H1 (cell line): ENCODE measurements at regions of chr13 and their contacts with region 1.

Region 1: DNA sequence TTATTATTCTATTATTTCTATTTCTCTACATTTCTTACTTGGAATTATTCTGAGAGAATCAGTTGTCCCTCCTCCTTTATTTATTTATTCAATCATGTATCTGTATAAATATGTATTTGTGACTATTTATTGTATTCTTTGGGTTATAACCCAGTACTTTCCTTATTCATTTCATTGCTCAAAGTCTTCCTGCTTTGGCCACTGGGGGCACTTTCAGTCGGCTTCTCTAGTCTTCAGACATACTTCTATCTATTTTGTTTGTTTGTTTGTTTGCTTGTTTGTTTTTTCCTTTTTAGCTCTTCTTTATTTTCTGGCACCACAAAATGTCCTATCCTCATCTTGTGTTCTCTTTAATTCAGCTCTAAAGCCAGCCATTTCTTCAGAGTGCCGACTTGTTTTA is 260.4 kb downstream of the NALCN start:
- DNase-seq: no peak
- H3K4me3 ChIP-seq: no peak overlapping the region
- H3K27ac ChIP-seq: no peak overlapping the region
- H3K4me1 ChIP-seq: no peaks in the 10 kb centered on the region
- H3K27me3 ChIP-seq: no peaks in the 10 kb centered on the region
- CTCF ChIP-seq: peak in 2 of 3 experiments; percentile 34 to 43; a peak in 2 of 4 replicates
- EP300 ChIP-seq: no peak
- POLR2A ChIP-seq: no peak
- RAD21 ChIP-seq: peak; percentile 33 to 35

Region 2: GRCh38 chr13:101127741-101128353 is 28.1 kb before region 1 on chr13:
- CTCF ChIA-PET with region 1: interaction called, 13 read pairs
- POLR2A ChIA-PET with region 1: no interaction called
- DNase-seq: no peak
- H3K4me3 ChIP-seq: no peak overlapping the region
- H3K27ac ChIP-seq: no peak overlapping the region
- H3K4me1 ChIP-seq: no peaks in the 10 kb centered on the region
- H3K27me3 ChIP-seq: no peaks in the 10 kb centered on the region
- CTCF ChIP-seq: peak in 2 of 3 experiments; percentile 53 to 67; a peak in 2 of 4 replicates
- EP300 ChIP-seq: no peak
- POLR2A ChIP-seq: no peak
- RAD21 ChIP-seq: peak; percentile 71 to 74

Region 3: DNA sequence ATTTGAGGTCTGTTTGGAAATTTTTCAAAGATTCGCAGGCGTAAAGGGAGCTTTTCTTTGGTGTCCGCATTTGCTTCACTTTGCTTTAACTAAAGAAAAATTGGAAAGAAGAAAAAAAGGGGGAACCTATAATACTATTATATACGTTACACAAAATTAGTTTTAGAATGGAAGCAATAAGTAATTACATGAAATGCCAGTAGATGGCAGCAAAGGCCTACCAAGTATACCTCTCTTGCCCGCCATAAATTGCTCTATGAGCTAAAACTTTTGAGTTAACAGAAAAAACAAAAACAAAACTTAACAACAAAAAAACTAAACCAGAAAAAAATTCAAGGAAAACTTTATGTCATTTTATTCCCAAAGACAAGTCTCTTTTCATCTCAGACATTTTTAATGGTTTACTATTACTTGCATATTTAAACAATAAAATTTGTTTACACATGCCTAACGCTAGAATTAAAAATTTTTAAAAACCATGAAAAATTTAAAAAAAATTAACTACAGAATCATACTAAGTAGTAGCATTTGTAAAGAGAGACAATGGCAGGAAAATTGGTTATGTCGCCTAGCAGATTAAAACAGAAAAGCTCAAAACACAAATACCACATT is 11.0 kb before region 1 on chr13:
- CTCF ChIA-PET with region 1: interaction called, 41 read pairs
- POLR2A ChIA-PET with region 1: no interaction called
- DNase-seq: no peak
- H3K4me3 ChIP-seq: no peak overlapping the region
- H3K27ac ChIP-seq: no peak overlapping the region
- H3K4me1 ChIP-seq: peaks cover 0 to 3% (median 0%) of the 10 kb centered on the region in 4 experiments; a peak in 1 of 7 replicates
- H3K27me3 ChIP-seq: no peaks in the 10 kb centered on the region
- CTCF ChIP-seq: peak in 2 of 3 experiments; percentile 31 to 48; a peak in 2 of 4 replicates
- EP300 ChIP-seq: no peak
- POLR2A ChIP-seq: no peak
- RAD21 ChIP-seq: peak; percentile 82 to 84

Region 4: GRCh38 chr13:101170306-101170705 is 14.4 kb after region 1 on chr13:
- CTCF ChIA-PET with region 1: interaction called, 31 read pairs
- POLR2A ChIA-PET with region 1: interaction called, 3 read pairs
- DNase-seq: no peak
- H3K4me3 ChIP-seq: no peak overlapping the region
- H3K27ac ChIP-seq: no peak overlapping the region
- H3K4me1 ChIP-seq: no peaks in the 10 kb centered on the region
- H3K27me3 ChIP-seq: no peaks in the 10 kb centered on the region
- CTCF ChIP-seq: no peak
- EP300 ChIP-seq: no peak
- POLR2A ChIP-seq: no peak
- RAD21 ChIP-seq: no peak

Region 5: GRCh38 chr13:101178406-101178805 is 22.5 kb after region 1 on chr13:
- CTCF ChIA-PET with region 1: interaction called, 31 read pairs
- POLR2A ChIA-PET with region 1: no interaction called
- DNase-seq: no peak
- H3K4me3 ChIP-seq: no peak overlapping the region
- H3K27ac ChIP-seq: no peak overlapping the region
- H3K4me1 ChIP-seq: no peaks in the 10 kb centered on the region
- H3K27me3 ChIP-seq: no peaks in the 10 kb centered on the region
- CTCF ChIP-seq: no peak
- EP300 ChIP-seq: no peak
- POLR2A ChIP-seq: no peak
- RAD21 ChIP-seq: no peak

Region 6: GRCh38 chr13:101202590-101202989 is 46.7 kb after region 1 on chr13:
- CTCF ChIA-PET with region 1: interaction called, 13 read pairs
- POLR2A ChIA-PET with region 1: no interaction called
- DNase-seq: peak; percentile 23 to 53
- H3K4me3 ChIP-seq: no peak overlapping the region
- H3K27ac ChIP-seq: no peak overlapping the region
- H3K4me1 ChIP-seq: no peaks in the 10 kb centered on the region
- H3K27me3 ChIP-seq: no peaks in the 10 kb centered on the region
- CTCF ChIP-seq: peak in 2 of 3 experiments; percentile 47 to 65; a peak in 3 of 4 replicates
- EP300 ChIP-seq: no peak
- POLR2A ChIP-seq: no peak
- RAD21 ChIP-seq: peak; percentile 36 to 55; a peak in 3 of 4 replicates

Region 7: GRCh38 chr13:101474419-101474957 is 318.6 kb after region 1 on chr13:
- CTCF ChIA-PET with region 1: interaction called, 206 read pairs
- POLR2A ChIA-PET with region 1: interaction called, 4 read pairs
- DNase-seq: peak in 1 of 2 experiments; percentile 61
- H3K4me3 ChIP-seq: no peak overlapping the region
- H3K27ac ChIP-seq: peak overlapping the region; percentile 16; the same call in 1 of the 2 replicates
- H3K4me1 ChIP-seq: peaks cover 0 to 4% (median 0%) of the 10 kb centered on the region in 4 experiments; a peak in 4 of 7 replicates
- H3K27me3 ChIP-seq: no peaks in the 10 kb centered on the region
- CTCF ChIP-seq: peak in 2 of 3 experiments; percentile 74 to 78; a peak in 3 of 4 replicates
- EP300 ChIP-seq: no peak
- POLR2A ChIP-seq: no peak
- RAD21 ChIP-seq: peak; percentile 95 to 96